Posterior vena cava (tissue), 2 donors: ENCODE measurements at regions of chr6 and their contacts with region 1.

Region 1: GRCh38 chr6:57109880-57110279 is 19.9 kb downstream of the ZNF451 start:
- DNase-seq: no peak

Region 2: GRCh38 chr6:56347526-56347925 is 762.4 kb before region 1 on chr6:
- intact Hi-C with region 1: loop called in 1 of 2 experiments (anchors 10 kb)
- DNase-seq: no peak

Region 3: GRCh38 chr6:57040009-57040408 is 69.9 kb before region 1 on chr6:
- intact Hi-C with region 1: no loop called
- DNase-seq: no peak

Region 4: DNA sequence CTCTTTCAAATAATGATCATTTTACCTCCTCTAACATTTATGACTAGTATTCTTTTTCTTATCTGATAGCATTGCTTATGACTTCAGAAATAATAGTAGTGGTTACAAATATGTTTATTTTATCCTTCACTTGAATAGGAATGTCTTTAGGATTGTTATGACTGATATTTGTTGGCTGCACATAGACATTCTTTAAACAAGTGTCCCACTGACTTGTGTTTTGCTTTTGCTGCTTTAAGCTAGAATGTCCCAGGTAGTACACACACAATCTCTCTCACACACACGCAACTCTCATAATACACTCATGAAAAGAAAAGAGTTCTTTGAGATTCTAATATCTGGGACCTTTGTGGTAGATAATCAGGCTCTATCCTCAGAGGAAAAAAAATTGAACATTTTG is 41.8 kb before region 1 on chr6:
- intact Hi-C with region 1: no loop called
- DNase-seq: no peak

Region 5: DNA sequence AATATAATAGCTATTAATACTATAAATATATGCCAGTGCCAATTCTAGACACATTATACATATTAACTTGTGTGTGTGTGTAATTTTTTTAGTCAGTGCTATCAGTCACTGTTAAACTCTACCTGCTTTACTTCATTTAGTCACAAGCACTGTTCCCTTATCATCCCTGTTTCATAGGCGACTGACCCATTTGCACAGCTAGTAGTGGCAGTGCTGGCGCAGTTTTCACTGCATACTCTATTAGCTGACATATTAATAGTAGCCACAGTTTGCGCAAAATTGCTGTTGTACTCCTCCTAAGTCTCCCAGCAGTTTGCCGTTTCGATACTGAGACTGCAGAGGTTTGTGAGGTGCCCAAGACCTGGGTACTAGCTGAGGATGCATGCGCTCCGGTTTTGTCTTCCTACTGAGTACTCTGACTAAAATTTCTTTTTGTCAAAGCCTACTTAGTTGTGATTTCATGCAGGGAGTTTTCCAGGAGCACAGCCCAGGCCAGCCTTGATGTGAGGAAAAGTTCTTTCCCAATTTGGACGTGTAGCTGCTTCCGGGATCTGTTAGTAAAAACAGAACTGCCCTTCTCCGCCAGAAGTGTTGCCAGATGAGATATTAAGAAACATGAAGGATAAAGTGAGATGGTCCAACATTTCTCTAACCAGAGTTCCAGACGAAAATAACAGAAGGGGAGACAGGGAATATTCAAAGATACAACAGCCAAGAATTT is 67.8 kb after region 1 on chr6:
- intact Hi-C with region 1: no loop called
- DNase-seq: peak; percentile 87

Region 6: GRCh38 chr6:57276946-57277345 is 167.1 kb after region 1 on chr6:
- intact Hi-C with region 1: no loop called
- DNase-seq: no peak